ENCODE measurements at regions of chr6 and their contacts with region 1.

Region 1: GRCh38 chr6:35311390-35312075 is 13.9 kb downstream of the DEF6 start:
- DNase-seq: peak; percentile 19 to 84 (median 64)
- ATAC-seq: peak; percentile 72
- H3K4me3 ChIP-seq: peak overlapping the region; percentile 29 to 42
- H3K4me3 Mint-ChIP-seq: peak overlapping the region; percentile 82
- H3K27ac ChIP-seq: peak overlapping the region; percentile 75 to 85
- H3K27ac Mint-ChIP-seq: peak overlapping the region; percentile 100
- H3K4me1 ChIP-seq: peaks cover 91% of the 10 kb centered on the region
- H3K4me1 Mint-ChIP-seq: peaks cover 88% of the 10 kb centered on the region
- H3K27me3 ChIP-seq: no peaks in the 10 kb centered on the region
- H3K27me3 Mint-ChIP-seq: no peaks in the 10 kb centered on the region
- CTCF ChIP-seq: no peak

Region 2: DNA sequence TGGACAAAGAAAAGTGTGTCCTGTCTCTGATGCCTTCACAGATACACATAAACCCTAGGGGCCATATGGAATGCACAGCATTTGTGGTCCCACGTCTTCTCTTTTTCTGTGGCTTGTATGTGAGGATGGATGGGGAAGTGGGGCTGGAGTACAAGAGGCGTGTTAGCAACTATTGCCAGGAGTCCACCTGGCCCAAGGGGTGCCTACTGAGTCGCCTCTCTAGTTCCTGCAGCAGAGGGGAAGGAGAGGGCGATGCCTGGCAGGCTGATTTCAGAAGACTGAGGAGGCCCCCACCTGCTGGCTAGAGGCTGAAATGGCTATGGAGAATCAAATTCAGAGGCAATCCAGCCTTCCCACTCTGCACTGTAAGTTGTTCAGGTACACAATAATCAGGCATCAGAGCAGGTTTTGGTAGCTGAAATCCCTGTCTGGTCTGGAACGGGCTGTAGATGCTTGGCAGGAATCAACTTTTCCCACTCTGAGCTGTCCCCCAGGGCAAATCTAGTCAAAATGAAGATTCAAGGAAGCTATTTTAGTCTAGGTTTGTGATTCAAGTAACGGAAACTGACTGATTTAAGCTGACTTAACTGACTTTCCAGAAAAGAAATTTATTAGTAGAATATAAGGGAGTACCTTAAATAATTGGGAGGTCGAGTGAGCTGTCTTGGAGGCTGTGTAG is 16.0 kb after region 1 on chr6:
- CTCF ChIA-PET with region 1: interaction called, 22 read pairs
- POLR2A ChIA-PET with region 1: interaction called, 8 read pairs
- intact Hi-C with region 1: loop called in 1 of 2 experiments (anchors 2 kb)
- DNase-seq: peak; percentile 61 to 86 (median 82)
- ATAC-seq: peak; percentile 81
- H3K4me3 ChIP-seq: no peak overlapping the region
- H3K4me3 Mint-ChIP-seq: peak overlapping the region; percentile 42
- H3K27ac ChIP-seq: peak overlapping the region in 1 of 2 experiments; percentile 62
- H3K27ac Mint-ChIP-seq: peak overlapping the region; percentile 88
- H3K4me1 ChIP-seq: peaks cover 19% of the 10 kb centered on the region
- H3K4me1 Mint-ChIP-seq: peaks cover 21% of the 10 kb centered on the region
- H3K27me3 ChIP-seq: no peaks in the 10 kb centered on the region
- H3K27me3 Mint-ChIP-seq: no peaks in the 10 kb centered on the region
- CTCF ChIP-seq: peak; percentile 68